Activated naive CD4-positive, alpha-beta T cell treated with anti-CD3 and anti-CD28 coated beads, Interleukin-2, amount 10 ng/mL, durations not matched to agents 7 days and 5 days (primary cell): ENCODE measurements at regions of chr1 and their contacts with region 1.

Region 1: GRCh38 chr1:109548321-109549267 is at the start of gene GNAI3:
- DNase-seq: peak; percentile 99
- H3K4me3 Mint-ChIP-seq: peak within 1 kb of the TSS; percentile 87
- H3K27ac Mint-ChIP-seq: peak within 1 kb of the TSS; percentile 98
- H3K4me1 Mint-ChIP-seq: peaks cover 47% of the 10 kb centered on the region
- H3K27me3 Mint-ChIP-seq: peaks cover 5% of the 10 kb centered on the region

Region 2: GRCh38 chr1:109502364-109502851 is 46.2 kb before region 1 on chr1:
- CTCF ChIA-PET with region 1: no interaction called
- DNase-seq: peak; percentile 78
- H3K4me3 Mint-ChIP-seq: peak overlapping the region; percentile 74
- H3K27ac Mint-ChIP-seq: peak overlapping the region; percentile 95
- H3K4me1 Mint-ChIP-seq: peaks cover 85% of the 10 kb centered on the region
- H3K27me3 Mint-ChIP-seq: peaks cover 2% of the 10 kb centered on the region

Region 3: DNA sequence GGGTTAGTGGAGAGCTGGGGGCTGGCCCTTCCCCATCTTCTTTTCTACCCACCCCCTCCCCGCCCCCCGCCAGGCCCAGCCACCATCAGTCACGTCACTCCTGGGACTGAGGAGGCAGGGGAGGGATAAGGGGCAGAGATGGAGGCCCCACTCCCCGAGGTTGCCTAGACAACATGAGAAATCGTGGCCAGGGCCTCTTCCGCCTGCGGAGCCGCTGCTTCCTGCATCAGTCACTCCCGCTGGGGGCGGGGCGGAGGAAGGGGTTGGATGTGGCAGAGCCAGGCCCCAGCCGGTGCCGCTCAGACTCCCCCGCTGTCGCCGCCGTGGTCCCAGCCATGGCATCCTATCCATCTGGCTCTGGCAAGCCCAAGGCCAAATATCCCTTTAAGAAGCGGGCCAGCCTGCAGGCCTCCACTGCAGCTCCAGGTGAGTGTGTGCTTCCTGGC is 72.3 kb after region 1 on chr1:
- CTCF ChIA-PET with region 1: interaction called, 12 read pairs
- DNase-seq: peak; percentile 99
- H3K4me3 Mint-ChIP-seq: peak overlapping the region; percentile 96
- H3K27ac Mint-ChIP-seq: peak overlapping the region; percentile 93
- H3K4me1 Mint-ChIP-seq: peaks cover 77% of the 10 kb centered on the region
- H3K27me3 Mint-ChIP-seq: no peaks in the 10 kb centered on the region

Region 4: GRCh38 chr1:109630081-109630897 is 81.7 kb after region 1 on chr1:
- CTCF ChIA-PET with region 1: interaction called, 145 read pairs
- DNase-seq: peak; percentile 52
- H3K4me3 Mint-ChIP-seq: no peak overlapping the region
- H3K27ac Mint-ChIP-seq: no peak overlapping the region
- H3K4me1 Mint-ChIP-seq: peaks cover 22% of the 10 kb centered on the region
- H3K27me3 Mint-ChIP-seq: no peaks in the 10 kb centered on the region

Region 5: GRCh38 chr1:109649491-109649914 is 100.9 kb after region 1 on chr1:
- CTCF ChIA-PET with region 1: interaction called, 28 read pairs
- DNase-seq: no peak
- H3K4me3 Mint-ChIP-seq: no peak overlapping the region
- H3K27ac Mint-ChIP-seq: no peak overlapping the region
- H3K4me1 Mint-ChIP-seq: peaks cover 2% of the 10 kb centered on the region
- H3K27me3 Mint-ChIP-seq: peaks cover 35% of the 10 kb centered on the region

Region 6: GRCh38 chr1:110076789-110077500 is 528.4 kb after region 1 on chr1:
- CTCF ChIA-PET with region 1: no interaction called
- DNase-seq: no peak
- H3K4me3 Mint-ChIP-seq: no peak overlapping the region
- H3K27ac Mint-ChIP-seq: no peak overlapping the region
- H3K4me1 Mint-ChIP-seq: no peaks in the 10 kb centered on the region
- H3K27me3 Mint-ChIP-seq: peaks cover 85% of the 10 kb centered on the region